ENCODE measurements at regions of chr2 and their contacts with region 1.

Region 1: GRCh38 chr2:178450774-178451525 is at the starts of genes PJVK and PRKRA:
- DNase-seq: peak; percentile 81
- ATAC-seq: peak; percentile 91
- H3K4me3 ChIP-seq: peak within 1 kb of the TSS; percentile 94
- H3K27ac ChIP-seq: peak within 1 kb of the TSS; percentile 94
- H3K4me1 ChIP-seq: peaks cover 9% of the 10 kb centered on the region
- H3K27me3 ChIP-seq: no peaks in the 10 kb centered on the region
- CTCF ChIP-seq: no peak
- EP300 ChIP-seq: 0 out of 4 replicates have a peak, but pooled peaks of 1 of the 2 experiments have one; percentile 2
- POLR2A ChIP-seq: peak; percentile 95
- RAD21 ChIP-seq: no peak
- polyA plus RNA-seq, gene PJVK: 2.1 to 3.0 TPM
- polyA plus RNA-seq, gene PRKRA: 19.1 to 25.1 TPM

Region 2: DNA sequence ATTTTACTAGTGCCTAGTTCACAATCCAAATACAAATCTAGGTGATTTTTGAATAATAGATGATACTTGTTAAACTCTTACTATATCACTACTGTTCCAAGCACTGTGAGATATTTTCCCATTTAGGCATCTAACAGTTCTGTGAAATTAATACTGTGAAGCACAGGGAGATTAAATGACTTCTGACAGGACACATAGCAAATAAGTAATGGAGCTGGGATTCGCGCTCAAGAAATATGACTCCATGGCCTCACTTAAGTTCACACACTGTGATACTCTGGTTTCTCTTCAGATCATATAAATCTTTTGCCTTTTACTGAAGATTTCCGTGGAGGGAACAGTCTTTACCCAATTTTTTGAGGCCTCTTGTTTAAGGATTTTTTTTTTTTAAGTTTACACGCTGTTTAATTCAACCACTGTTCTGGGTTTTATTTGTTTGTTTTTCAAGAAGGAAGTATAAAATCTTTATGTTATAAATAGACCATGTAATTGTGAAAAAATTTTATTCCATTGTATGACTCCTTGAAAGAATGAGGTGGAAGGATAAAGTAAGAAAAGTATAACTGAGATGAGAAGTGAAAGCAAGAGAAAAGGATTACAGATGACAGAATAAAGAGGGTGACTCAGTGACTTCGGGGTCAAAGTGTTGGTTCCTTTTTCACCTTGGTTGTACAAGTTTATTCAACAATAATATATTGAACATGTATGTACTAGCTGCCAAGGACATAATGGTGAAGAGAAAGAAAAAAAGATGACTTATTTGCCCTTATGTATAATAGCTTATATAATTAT is 308.5 kb before region 1 on chr2:
- CTCF ChIA-PET with region 1: no interaction called
- POLR2A ChIA-PET with region 1: no interaction called
- RAD21 ChIA-PET with region 1: no interaction called
- SMC1A ChIA-PET with region 1: no interaction called
- in situ Hi-C with region 1: no loop called
- intact Hi-C with region 1: no loop called
- DNase-seq: no peak
- ATAC-seq: peak; percentile 34; the same call in 1 of the 3 replicates
- H3K4me3 ChIP-seq: no peak overlapping the region
- H3K27ac ChIP-seq: no peak overlapping the region
- H3K4me1 ChIP-seq: no peaks in the 10 kb centered on the region
- H3K27me3 ChIP-seq: no peaks in the 10 kb centered on the region
- CTCF ChIP-seq: no peak
- EP300 ChIP-seq: no peak
- POLR2A ChIP-seq: no peak
- RAD21 ChIP-seq: no peak

Region 3: DNA sequence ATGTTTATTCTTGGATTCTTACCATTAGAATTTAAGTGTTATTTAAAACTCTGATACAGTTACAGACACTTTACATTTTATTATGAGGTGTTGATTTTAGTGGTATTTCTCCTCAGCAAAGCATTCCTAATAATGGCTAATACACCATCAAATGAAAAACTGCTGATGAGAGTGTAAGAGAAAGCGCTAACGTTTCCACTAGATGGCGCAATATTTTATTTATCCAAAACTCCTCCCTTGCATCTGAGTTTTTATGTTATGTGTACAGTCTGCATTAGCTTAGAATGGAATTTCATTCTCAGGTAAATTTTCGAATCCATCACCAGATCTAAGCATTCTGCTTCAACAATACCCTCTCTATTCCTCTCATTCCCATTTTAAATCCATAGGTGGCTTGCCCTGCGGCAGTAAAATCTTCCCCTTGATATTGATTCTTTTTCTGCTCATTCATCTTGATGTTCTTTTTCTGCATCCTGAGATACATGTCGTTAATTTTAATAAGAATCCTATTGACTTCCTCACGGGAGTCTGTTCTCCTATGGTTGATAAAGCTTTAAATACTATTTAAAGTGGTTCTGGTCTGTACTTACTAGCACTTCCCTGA is 53.8 kb before region 1 on chr2:
- CTCF ChIA-PET with region 1: interaction called, 11 read pairs
- POLR2A ChIA-PET with region 1: interaction called, 4 read pairs
- RAD21 ChIA-PET with region 1: interaction called, 3 read pairs
- SMC1A ChIA-PET with region 1: interaction called, 5 read pairs
- in situ Hi-C with region 1: no loop called
- intact Hi-C with region 1: no loop called
- DNase-seq: no peak
- ATAC-seq: peak; percentile 96
- H3K4me3 ChIP-seq: no peak overlapping the region
- H3K27ac ChIP-seq: no peak overlapping the region
- H3K4me1 ChIP-seq: no peaks in the 10 kb centered on the region
- H3K27me3 ChIP-seq: no peaks in the 10 kb centered on the region
- CTCF ChIP-seq: peak; percentile 48 to 63 (median 54); a peak in 5 of 6 replicates
- EP300 ChIP-seq: no peak
- POLR2A ChIP-seq: no peak
- RAD21 ChIP-seq: peak; percentile 68